Endothelial cell of umbilical vein (primary cell): ENCODE measurements at regions of chr2 and their contacts with region 1.

Region 1: DNA sequence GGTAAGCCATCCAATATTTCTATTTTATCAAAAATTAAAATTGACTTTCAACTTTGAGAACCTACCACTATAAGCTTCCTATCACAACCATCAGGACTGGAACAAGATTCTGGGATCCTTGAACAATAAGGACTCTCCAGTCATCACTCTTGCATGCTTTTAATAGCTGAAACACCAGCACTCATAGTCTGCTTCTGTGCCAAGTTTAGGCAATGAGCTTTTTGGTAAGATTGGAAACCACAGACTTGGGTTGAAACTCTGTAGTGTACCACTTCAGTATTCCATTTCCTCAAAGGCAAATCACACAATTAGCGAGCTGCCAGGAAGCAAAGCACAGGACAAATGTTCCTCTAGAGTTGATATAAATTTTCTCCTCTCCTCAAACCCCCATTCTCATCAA is 1065.8 kb upstream of the SLC39A10 start:
- DNase-seq: no peak
- H3K4me3 ChIP-seq: no peak overlapping the region
- H3K27ac ChIP-seq: no peak overlapping the region
- H3K4me1 ChIP-seq: no peaks in the 10 kb centered on the region
- H3K27me3 ChIP-seq: no peaks in the 10 kb centered on the region
- CTCF ChIP-seq: no peak
- POLR2A ChIP-seq: no peak

Region 2: GRCh38 chr2:194602750-194603149 is 11.6 kb after region 1 on chr2:
- CTCF ChIA-PET with region 1: interaction called, 3 read pairs
- POLR2A ChIA-PET with region 1: no interaction called
- dilution Hi-C with region 1: no loop called
- intact Hi-C with region 1: loop called (anchors 1 kb)
- DNase-seq: no peak
- H3K4me3 ChIP-seq: no peak overlapping the region
- H3K27ac ChIP-seq: no peak overlapping the region
- H3K4me1 ChIP-seq: no peaks in the 10 kb centered on the region
- H3K27me3 ChIP-seq: no peaks in the 10 kb centered on the region
- CTCF ChIP-seq: no peak
- POLR2A ChIP-seq: no peak